Activated CD4-positive, alpha-beta memory T cell treated with anti-CD3 and anti-CD28 coated beads, Interleukin-2, amount 10 ng/mL, durations not matched to agents 7 days and 5 days (primary cell): ENCODE measurements at regions of chr17 and their contacts with region 1.

Region 1: DNA sequence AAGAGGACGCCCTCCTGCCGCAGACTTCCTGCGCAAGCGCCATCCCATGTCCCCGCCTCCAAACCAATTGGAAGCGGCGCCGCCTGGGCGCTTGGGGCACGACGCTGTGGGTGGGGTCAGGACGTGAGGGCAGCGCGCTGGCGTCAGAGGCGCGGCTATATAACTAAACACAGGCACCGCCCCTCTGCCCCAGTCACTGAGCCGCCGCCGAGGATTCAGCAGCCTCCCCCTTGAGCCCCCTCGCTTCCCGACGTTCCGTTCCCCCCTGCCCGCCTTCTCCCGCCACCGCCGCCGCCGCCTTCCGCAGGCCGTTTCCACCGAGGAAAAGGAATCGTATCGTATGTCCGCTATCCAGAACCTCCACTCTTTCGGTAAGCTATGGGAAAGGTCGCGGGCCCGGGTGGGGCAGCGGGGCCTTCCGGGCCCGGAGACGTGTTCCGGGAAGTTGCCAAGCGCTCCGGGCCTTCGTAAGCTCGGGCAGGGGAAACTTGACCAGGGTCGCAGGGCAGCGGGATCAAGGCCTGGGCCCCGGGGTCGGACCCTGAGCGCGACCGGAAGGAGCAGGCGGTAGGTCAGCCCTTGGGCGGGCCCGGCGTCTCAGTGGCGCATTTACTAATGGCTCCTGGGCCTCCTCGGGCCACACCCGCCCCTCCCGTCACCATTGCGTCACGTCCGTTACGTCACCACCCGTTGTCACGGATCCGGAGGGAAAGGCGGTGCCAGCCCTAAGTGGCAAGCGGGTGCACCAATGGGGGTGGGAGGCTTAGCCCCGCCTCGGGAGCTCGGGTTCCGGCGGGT is at the start of gene EIF1:
- DNase-seq: peak; percentile 100
- H3K4me3 Mint-ChIP-seq: peak within 1 kb of the TSS; percentile 88
- H3K27ac Mint-ChIP-seq: peak within 1 kb of the TSS; percentile 98
- H3K4me1 Mint-ChIP-seq: peaks cover 39% of the 10 kb centered on the region
- H3K27me3 Mint-ChIP-seq: no peaks in the 10 kb centered on the region
- total RNA-seq, gene EIF1: 933 to 950 TPM

Region 2: DNA sequence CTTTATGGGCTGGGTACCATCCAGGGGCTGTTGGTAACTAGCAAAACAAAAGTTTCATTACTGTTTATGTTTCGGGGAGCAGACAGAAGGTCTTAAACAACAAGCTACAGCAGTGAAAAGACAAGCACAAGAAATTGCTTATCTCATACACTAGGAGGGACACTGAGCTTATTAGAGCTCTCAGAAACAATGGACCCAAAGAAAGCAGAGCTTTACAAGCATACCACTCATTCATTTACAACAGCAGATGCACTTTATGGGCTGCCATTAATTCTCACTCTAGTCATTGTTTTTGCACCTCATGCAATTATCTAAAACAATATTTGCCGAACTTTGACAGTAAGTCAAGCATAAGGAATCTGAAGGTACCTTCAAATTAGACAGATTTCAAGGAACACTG is 86.4 kb before region 1 on chr17:
- CTCF ChIA-PET with region 1: no interaction called
- POLR2A ChIA-PET with region 1: no interaction called
- DNase-seq: no peak
- H3K4me3 Mint-ChIP-seq: no peak overlapping the region
- H3K27ac Mint-ChIP-seq: no peak overlapping the region
- H3K4me1 Mint-ChIP-seq: no peaks in the 10 kb centered on the region
- H3K27me3 Mint-ChIP-seq: peaks cover 26% of the 10 kb centered on the region

Region 3: GRCh38 chr17:41648411-41649195 is 40.3 kb before region 1 on chr17:
- CTCF ChIA-PET with region 1: interaction called, 22 read pairs
- POLR2A ChIA-PET with region 1: interaction called, 12 read pairs
- DNase-seq: peak; percentile 85
- H3K4me3 Mint-ChIP-seq: peak overlapping the region; percentile 52
- H3K27ac Mint-ChIP-seq: peak overlapping the region; percentile 9
- H3K4me1 Mint-ChIP-seq: peaks cover 11% of the 10 kb centered on the region
- H3K27me3 Mint-ChIP-seq: peaks cover 8% of the 10 kb centered on the region

Region 4: DNA sequence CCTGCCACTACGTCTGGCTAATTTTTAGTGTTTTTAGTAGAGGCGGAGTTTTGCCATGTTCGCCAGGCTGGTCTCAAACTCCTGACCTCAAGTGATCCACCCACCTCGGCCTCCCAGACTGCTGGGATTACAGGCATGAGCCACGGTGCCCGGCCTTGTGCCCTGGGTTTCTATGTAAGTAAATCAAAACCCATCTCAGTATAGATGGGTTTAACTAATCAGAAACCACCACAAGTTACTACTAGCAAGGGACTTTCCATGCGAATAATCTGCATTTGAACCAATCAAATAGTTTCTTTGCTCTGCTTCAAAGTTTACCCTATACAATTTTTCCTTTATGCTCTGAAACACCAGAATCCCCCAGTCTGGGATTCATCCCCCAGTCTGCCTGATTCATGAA is 16.7 kb before region 1 on chr17:
- CTCF ChIA-PET with region 1: interaction called, 395 read pairs
- POLR2A ChIA-PET with region 1: interaction called, 494 read pairs
- DNase-seq: no peak
- H3K4me3 Mint-ChIP-seq: no peak overlapping the region
- H3K27ac Mint-ChIP-seq: peak overlapping the region; percentile 59
- H3K4me1 Mint-ChIP-seq: peaks cover 67% of the 10 kb centered on the region
- H3K27me3 Mint-ChIP-seq: no peaks in the 10 kb centered on the region

Region 5: DNA sequence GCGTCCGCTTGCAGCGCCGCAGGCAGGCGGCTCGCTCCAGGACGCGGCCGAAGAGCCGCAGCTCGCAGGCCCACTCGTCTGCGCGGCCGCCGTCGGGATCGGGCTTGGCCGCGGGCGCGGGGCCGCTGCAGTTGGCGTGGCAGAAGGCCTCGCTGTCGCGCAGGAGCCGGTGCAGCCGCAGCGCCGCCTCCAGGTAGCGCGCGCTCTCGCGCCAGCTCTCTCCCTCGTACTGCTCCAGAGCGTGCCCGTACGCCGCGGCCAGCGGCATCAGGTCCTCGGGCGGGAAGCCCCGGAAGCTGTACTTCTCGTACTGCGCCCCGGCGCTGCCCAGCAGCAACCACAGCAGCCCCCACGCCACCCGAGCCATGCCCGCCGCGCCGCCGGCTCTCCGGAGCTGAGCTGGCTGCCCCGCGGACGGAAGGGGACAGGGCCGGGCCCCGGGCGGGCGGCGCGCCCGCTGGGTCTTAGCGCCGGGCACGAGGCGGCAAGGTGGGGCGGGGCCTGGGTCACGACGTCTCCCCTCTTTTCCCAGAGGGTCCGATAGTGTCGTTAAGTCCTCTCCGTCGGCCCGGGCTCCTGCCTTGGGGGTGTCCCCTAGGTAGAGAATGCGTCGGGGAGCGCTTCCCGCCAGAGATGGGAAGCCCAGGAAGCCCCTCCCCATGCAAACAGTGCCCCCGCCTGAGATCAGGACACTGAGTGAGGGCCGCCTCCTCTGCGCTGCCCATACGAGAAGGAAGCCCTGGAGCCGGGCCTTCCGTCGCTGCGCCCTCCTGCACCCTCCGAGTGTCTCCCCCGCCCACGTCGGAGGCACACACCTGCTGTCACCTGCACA is 122.9 kb after region 1 on chr17 and contains the start of gene P3H4:
- CTCF ChIA-PET with region 1: interaction called, 3 read pairs
- POLR2A ChIA-PET with region 1: interaction called, 12 read pairs
- DNase-seq: peak; percentile 79
- H3K4me3 Mint-ChIP-seq: peak within 1 kb of the TSS; percentile 76
- H3K27ac Mint-ChIP-seq: peak within 1 kb of the TSS; percentile 1
- H3K4me1 Mint-ChIP-seq: peaks cover 16% of the 10 kb centered on the region
- H3K27me3 Mint-ChIP-seq: peaks cover 19% of the 10 kb centered on the region
- total RNA-seq, gene P3H4: 1.8 to 1.9 TPM

Region 6: DNA sequence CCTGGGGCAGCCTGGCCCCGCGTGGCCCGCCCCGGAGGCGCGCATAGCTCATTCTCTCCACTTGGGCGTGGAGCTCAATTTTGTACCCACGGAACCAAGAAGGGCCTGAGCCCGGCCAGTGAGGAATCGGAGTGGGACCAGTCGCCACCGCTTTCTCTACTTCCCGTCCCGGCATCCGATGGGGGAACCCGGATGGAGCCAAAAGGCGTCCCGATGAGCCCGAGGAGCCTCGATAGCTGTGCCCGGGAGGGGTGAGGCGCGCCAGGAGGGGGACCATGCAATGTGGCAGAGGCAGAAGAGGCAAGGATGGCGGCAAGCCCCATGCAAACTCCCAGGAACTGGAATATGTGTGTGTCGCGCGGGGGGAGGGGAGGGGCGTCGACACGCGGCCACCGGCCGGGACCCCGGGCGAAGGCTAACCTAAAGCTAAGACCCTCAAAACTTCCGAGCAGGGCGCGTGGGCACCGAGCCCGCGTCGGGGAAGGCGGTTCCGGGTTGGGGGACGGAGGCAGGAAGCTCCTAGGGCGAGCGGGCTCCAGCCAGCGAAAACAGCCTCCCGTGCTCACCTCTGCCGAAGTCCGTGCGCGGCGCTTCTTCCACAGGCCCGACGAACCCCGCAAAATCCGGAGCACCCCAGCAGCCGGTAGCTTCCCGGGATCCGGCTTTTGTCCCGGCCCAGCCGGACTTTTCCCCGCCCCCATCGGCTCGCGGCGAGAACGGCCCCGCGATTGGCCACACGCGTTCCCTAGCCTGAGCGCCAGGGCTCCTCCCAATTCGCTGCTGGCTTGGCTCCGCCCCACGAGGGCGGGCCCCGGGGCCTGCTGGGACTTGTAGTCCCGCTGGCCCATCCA is 229.6 kb after region 1 on chr17 and contains the start of gene ACLY:
- CTCF ChIA-PET with region 1: interaction called, 5 read pairs
- POLR2A ChIA-PET with region 1: interaction called, 14 read pairs
- DNase-seq: peak; percentile 97
- H3K4me3 Mint-ChIP-seq: peak within 1 kb of the TSS; percentile 96
- H3K27ac Mint-ChIP-seq: peak within 1 kb of the TSS; percentile 90
- H3K4me1 Mint-ChIP-seq: peaks cover 38% of the 10 kb centered on the region
- H3K27me3 Mint-ChIP-seq: no peaks in the 10 kb centered on the region
- total RNA-seq, gene ACLY: 177 to 183 TPM